B cell (primary cell): ENCODE measurements at regions of chr7 and their contacts with region 1.

Region 1: DNA sequence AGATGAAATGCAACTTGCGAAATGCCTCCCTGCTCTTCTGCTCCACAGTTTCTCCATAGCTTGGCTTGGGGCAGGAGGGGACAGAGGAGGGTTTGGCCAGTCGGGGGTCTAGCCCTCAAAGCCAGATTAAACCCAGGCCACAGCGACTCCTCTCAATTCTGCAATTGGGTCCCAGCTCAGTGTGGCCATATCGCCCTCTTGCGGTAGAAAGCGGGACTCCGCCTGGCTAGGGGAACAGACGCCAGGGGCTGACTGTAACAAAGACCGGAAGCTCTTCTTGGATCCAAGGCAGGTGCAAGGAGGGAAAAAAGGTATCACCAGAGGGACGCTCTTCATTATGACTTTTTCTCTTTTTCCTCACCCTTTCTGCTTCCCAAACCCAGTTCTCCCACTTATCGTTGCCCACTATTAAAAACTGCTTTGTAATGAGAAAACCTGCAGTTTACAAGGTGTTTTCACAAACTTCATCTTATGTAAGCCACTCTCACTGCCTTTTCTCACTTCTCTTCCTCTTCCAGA is 36.6 kb upstream of the TNPO3 start:
- DNase-seq: peak; percentile 88
- ATAC-seq: peak; percentile 85
- H3K4me3 ChIP-seq: no peak overlapping the region
- H3K4me3 Mint-ChIP-seq: peak overlapping the region; percentile 47
- H3K27ac ChIP-seq: peak overlapping the region in 1 of 2 donors; percentile 58
- H3K27ac Mint-ChIP-seq: peak overlapping the region; percentile 82
- H3K4me1 ChIP-seq: peaks cover 31% of the 10 kb centered on the region in 2 donors
- H3K4me1 Mint-ChIP-seq: peaks cover 40% of the 10 kb centered on the region
- H3K27me3 ChIP-seq: no peaks in the 10 kb centered on the region
- H3K27me3 Mint-ChIP-seq: no peaks in the 10 kb centered on the region
- CTCF ChIP-seq: peak; percentile 97

Region 2: GRCh38 chr7:128904381-128905197 is 187.0 kb before region 1 on chr7:
- CTCF ChIA-PET with region 1: interaction called, 28 read pairs
- POLR2A ChIA-PET with region 1: no interaction called
- intact Hi-C with region 1: loop called (anchors 1 kb)
- DNase-seq: peak; percentile 84
- ATAC-seq: peak; percentile 89
- H3K4me3 ChIP-seq: no peak overlapping the region
- H3K4me3 Mint-ChIP-seq: no peak overlapping the region
- H3K27ac ChIP-seq: no peak overlapping the region
- H3K27ac Mint-ChIP-seq: no peak overlapping the region
- H3K4me1 ChIP-seq: peaks cover 3 to 9% of the 10 kb centered on the region in 2 donors
- H3K4me1 Mint-ChIP-seq: peaks cover 11% of the 10 kb centered on the region
- H3K27me3 ChIP-seq: peaks cover 0 to 15% (median 5%) of the 10 kb centered on the region in 4 experiments
- H3K27me3 Mint-ChIP-seq: peaks cover 20% of the 10 kb centered on the region
- CTCF ChIP-seq: peak; percentile 85

Region 3: GRCh38 chr7:129101746-129102145 is 10.2 kb after region 1 on chr7:
- CTCF ChIA-PET with region 1: interaction called, 15 read pairs
- POLR2A ChIA-PET with region 1: no interaction called
- intact Hi-C with region 1: no loop called
- DNase-seq: no peak
- ATAC-seq: no peak
- H3K4me3 ChIP-seq: no peak overlapping the region
- H3K4me3 Mint-ChIP-seq: no peak overlapping the region
- H3K27ac ChIP-seq: no peak overlapping the region
- H3K27ac Mint-ChIP-seq: no peak overlapping the region
- H3K4me1 ChIP-seq: peaks cover 14% of the 10 kb centered on the region in 2 donors
- H3K4me1 Mint-ChIP-seq: peaks cover 21% of the 10 kb centered on the region
- H3K27me3 ChIP-seq: no peaks in the 10 kb centered on the region
- H3K27me3 Mint-ChIP-seq: no peaks in the 10 kb centered on the region
- CTCF ChIP-seq: no peak

Region 4: DNA sequence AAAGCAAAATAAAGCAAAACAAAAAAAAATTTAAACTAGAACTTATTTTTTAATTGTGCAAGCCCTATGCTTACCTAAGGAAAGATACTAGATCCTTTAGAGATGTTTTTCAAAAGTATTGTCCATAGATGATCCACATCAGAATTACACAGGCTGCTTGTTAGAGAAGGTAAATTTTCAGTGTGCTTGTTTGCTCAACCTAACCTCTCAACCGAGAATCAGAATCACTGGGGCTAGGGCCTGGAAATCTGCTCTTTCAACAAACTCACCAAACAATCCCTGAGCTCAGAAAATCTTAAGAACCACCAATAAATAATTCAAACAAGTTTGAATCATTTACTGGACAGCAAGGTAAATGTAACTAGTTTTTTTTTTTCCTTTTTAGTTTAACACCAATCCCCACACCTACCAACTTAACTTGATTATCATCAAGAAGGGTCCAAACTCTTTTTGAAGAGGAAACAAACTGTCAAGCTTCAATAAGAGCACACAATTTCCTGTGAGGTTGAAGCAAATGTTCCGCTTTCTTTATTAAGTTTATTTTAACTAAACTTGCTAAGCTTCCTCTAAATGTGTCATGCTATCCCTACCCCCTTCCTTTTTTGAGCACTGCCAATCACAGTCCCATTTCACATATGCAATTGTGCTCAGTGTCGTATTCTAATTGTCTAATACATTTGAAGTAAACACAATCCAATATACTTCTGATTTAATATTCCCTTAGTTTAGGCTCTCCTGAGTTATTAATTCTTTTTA is 45.5 kb after region 1 on chr7:
- CTCF ChIA-PET with region 1: interaction called, 23 read pairs
- POLR2A ChIA-PET with region 1: interaction called, 4 read pairs
- intact Hi-C with region 1: loop called (anchors 1 kb)
- DNase-seq: peak; percentile 82
- ATAC-seq: peak; percentile 88
- H3K4me3 ChIP-seq: peak overlapping the region in 4 of 5 experiments; percentile 4 to 62 (median 18)
- H3K4me3 Mint-ChIP-seq: peak overlapping the region; percentile 85
- H3K27ac ChIP-seq: peak overlapping the region; percentile 90 to 93
- H3K27ac Mint-ChIP-seq: peak overlapping the region; percentile 99
- H3K4me1 ChIP-seq: peaks cover 44 to 65% of the 10 kb centered on the region in 2 donors
- H3K4me1 Mint-ChIP-seq: peaks cover 55% of the 10 kb centered on the region
- H3K27me3 ChIP-seq: no peaks in the 10 kb centered on the region
- H3K27me3 Mint-ChIP-seq: no peaks in the 10 kb centered on the region
- CTCF ChIP-seq: no peak

Region 5: GRCh38 chr7:129163875-129164544 is 72.5 kb after region 1 on chr7:
- CTCF ChIA-PET with region 1: interaction called, 118 read pairs
- POLR2A ChIA-PET with region 1: no interaction called
- intact Hi-C with region 1: loop called (anchors 1 kb)
- DNase-seq: peak; percentile 72
- ATAC-seq: no peak
- H3K4me3 ChIP-seq: no peak overlapping the region
- H3K4me3 Mint-ChIP-seq: no peak overlapping the region
- H3K27ac ChIP-seq: no peak overlapping the region
- H3K27ac Mint-ChIP-seq: peak overlapping the region; percentile 17
- H3K4me1 ChIP-seq: peaks cover 52 to 54% of the 10 kb centered on the region in 2 donors
- H3K4me1 Mint-ChIP-seq: peaks cover 74% of the 10 kb centered on the region
- H3K27me3 ChIP-seq: no peaks in the 10 kb centered on the region
- H3K27me3 Mint-ChIP-seq: no peaks in the 10 kb centered on the region
- CTCF ChIP-seq: peak; percentile 92